BJ (cell line): ENCODE measurements at regions of chr1 and their contacts with region 1.

Region 1: DNA sequence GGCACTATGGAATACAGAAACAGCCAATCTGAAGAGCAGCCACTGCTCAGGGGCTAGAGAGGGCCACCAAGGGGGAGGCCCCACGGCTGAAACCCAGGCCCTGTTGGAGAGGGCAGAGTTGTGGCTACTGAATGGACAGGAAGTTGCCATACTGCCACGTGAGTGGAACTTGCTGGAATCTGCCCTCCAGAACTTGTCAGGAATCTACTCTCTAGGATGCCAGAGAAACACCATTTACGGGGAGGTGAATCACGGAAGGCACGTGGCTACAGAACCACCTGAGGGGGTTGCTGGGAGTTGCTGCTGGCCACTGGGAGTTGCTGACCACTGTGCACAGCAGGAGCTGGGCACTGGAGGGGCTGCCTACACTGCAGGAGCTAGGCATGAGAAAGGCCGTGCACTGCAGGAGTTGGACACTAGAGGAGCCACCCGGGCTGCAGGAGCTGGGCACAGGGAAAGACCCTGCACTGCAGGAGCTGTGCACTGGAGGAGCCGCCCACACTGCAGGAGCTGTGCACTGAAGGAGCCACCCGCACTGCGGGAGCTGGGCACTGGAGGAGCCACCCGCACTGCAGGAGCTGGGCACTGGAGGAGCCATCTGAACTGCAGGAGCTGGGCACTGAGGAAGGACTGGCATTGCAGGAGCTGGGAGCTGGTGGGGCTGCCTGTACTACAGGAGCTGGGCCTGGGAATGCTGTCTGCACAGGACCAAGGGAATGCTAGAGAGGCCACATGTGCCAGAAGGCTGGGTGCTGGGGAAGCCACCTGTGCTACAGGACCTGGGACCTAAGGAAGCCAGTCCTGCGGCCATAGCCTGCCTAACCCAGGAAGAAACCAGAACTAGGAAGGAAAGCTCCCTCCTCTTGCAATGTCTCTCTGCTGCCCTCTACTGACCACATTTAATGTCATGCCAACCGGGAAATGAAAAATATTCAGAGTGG is 343.4 kb downstream of the MATN1 start:
- DNase-seq: peak; percentile 26
- H3K4me3 ChIP-seq: no peak overlapping the region
- H3K27me3 ChIP-seq: peaks cover 1% of the 10 kb centered on the region
- CTCF ChIP-seq: peak; percentile 85

Region 2: DNA sequence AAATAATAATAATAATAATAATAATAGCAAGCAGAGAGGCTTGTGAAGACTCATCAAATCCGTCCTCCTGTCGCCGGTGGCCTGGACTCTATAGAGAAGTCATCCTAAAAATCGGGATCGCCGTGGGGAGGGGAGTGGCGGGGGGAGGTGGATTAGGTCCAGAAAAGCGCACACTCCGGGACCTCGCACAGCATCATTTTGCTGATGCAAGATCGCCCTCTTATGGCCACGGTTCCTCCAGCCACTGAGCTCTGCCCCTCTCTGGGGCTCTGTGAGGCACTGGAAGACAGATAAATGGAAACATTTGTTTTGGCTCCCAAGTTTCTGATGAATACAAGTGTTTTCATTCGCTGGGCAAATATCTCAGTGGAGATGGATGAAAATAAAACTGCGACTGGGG is 268.5 kb before region 1 on chr1:
- CTCF ChIA-PET with region 1: interaction called, 10 read pairs
- POLR2A ChIA-PET with region 1: no interaction called
- DNase-seq: no peak
- H3K4me3 ChIP-seq: no peak overlapping the region
- H3K27me3 ChIP-seq: peaks cover 11% of the 10 kb centered on the region
- CTCF ChIP-seq: peak; percentile 75

Region 3: DNA sequence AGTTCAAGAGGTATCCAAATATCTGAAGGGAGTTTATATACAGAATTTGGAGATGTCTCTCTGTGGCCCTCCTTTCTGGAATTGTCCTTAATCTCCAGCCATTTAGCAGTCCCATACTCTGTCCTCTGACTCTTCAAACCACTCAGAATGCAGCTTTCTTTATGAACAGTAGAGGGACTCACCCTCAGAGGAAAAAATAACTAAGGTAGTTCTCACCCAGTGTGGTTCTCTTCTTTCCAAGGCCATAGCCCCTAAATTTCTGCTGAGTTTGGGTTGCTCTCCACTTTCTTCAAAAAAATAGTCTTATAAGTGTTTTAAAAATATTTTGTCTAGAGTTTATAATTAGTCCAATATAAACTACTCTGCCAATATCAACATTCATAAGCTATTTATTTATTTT is 26.3 kb before region 1 on chr1:
- CTCF ChIA-PET with region 1: interaction called, 28 read pairs
- POLR2A ChIA-PET with region 1: no interaction called
- DNase-seq: no peak
- H3K4me3 ChIP-seq: no peak overlapping the region
- H3K27me3 ChIP-seq: no peaks in the 10 kb centered on the region
- CTCF ChIP-seq: peak; percentile 53

Region 4: GRCh38 chr1:30366911-30367310 is 13.0 kb before region 1 on chr1:
- CTCF ChIA-PET with region 1: interaction called, 34 read pairs
- POLR2A ChIA-PET with region 1: no interaction called
- DNase-seq: no peak
- H3K4me3 ChIP-seq: no peak overlapping the region
- H3K27me3 ChIP-seq: peaks cover 2% of the 10 kb centered on the region; the same call in 1 of the 2 replicates
- CTCF ChIP-seq: no peak

Region 5: DNA sequence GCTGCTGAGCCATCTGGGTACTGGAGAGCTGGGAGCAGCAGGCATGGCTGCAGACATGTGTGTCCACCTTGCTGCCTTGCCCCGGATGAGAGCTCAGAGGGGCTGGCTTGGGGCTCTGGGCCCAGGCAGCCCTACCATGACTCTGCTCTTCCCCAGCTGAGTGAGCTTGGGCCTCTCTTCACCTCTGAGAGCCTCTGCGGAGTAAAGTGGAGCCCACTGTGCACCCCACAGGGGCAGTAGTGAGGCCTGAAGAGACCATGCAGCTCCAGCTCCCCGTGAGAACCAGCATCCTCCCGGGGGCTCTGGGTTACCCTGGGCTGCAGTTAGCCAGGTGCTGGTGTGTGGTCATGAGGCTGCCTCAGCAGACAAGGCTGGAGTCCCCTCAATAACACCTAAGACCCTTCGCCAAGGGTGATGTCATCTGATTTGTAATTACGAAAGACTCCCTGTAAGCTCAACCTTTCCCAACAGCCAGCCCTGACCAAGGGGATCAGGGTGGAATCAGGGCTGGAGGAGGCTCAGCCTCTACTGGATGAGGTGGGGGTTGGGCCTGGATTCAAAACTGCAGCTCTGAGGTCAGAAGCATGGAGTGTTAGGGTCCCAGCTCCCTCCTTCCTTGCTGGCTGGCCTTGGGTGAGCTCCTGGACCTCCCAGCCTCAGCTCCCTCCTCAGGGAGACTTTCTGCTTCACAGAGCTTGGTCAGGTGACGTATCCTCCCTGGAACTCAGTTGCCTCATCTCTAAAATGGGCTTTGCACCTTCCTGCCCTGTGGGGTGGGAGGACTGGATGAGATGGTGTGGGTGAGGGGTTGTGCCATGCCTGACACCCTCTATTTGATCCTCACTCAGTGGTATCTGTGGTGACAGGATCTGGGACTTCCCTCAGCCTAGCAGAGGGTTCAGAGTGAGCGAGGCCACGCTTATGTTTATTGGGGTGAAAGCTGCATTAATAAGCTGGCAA is 35.5 kb after region 1 on chr1:
- CTCF ChIA-PET with region 1: interaction called, 10 read pairs
- POLR2A ChIA-PET with region 1: no interaction called
- DNase-seq: no peak
- H3K4me3 ChIP-seq: no peak overlapping the region
- H3K27me3 ChIP-seq: peaks cover 1% of the 10 kb centered on the region; the same call in 1 of the 2 replicates
- CTCF ChIP-seq: no peak

Region 6: DNA sequence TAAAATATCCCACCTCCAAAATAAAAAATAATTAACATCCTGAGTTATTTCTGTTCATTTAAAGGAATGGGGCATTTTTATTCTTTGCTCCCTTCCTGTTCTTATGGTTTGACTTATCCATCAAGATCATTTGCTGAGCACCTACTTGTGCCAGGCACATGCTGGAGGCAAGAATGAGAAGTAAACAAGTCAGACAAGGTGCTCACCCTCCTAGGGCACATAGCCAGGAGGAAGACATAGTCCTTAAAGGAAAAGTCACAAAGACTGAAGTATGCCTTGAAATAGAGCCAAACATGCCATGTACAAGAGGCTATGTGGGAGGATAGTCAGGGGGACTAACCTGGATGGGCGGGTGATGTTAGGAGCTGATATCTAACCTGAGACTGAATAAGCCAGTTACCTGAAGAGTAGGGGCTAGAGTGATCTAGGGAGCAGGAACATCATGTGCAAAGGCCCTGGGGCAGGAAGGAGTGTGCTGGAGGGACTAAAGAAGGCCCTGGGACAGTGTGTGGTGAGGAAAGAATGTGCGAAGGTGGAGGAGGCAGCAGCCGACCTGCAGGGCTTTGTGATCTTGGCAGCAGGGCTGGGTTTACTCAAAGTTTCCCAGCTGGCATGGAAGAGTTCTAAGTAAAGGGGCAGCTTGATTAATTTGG is 109.9 kb after region 1 on chr1:
- CTCF ChIA-PET with region 1: no interaction called
- POLR2A ChIA-PET with region 1: no interaction called
- DNase-seq: no peak
- H3K4me3 ChIP-seq: no peak overlapping the region
- H3K27me3 ChIP-seq: no peaks in the 10 kb centered on the region
- CTCF ChIP-seq: no peak

Region 7: GRCh38 chr1:30707412-30708360 is 327.7 kb after region 1 on chr1:
- CTCF ChIA-PET with region 1: interaction called, 22 read pairs
- POLR2A ChIA-PET with region 1: no interaction called
- DNase-seq: no peak
- H3K4me3 ChIP-seq: no peak overlapping the region
- H3K27me3 ChIP-seq: peaks cover 13% of the 10 kb centered on the region
- CTCF ChIP-seq: peak; percentile 90